ENCODE measurements at regions of chr22 and their contacts with region 1.

Region 1: GRCh38 chr22:42511401-42511891 is 8.2 kb downstream of the RRP7A start:
- DNase-seq: no peak
- ATAC-seq: peak in 1 of 4 donors; percentile 14
- H3K4me3 ChIP-seq: no peak overlapping the region
- H3K27ac ChIP-seq: peak overlapping the region in 1 of 12 donors; percentile 83
- H3K4me1 ChIP-seq: peaks cover 0 to 21% (median 4%) of the 10 kb centered on the region in 12 donors
- H3K27me3 ChIP-seq: no peaks in the 10 kb centered on the region
- CTCF ChIP-seq: no peak
- POLR2A ChIP-seq: no peak

Region 2: DNA sequence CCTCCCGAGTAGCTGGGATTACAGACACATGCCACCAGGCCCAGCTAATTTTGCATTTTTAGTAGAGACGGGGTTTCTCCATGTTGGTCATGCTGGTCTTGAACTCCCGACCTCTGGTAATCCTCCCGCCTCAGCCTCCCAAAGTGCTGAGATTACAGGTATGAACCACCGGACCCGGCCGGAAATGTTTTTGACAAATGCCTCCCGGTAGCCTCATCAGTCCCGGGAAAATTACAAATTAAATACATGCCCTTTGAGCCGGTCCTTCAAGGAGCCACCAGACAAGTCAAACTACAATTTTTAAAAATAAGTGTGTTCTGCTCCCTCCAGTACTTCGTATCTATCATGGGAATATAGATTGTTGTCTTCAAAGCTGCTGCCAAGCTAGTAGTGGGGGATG is 495.3 kb before region 1 on chr22:
- intact Hi-C with region 1: no loop called
- DNase-seq: no peak
- ATAC-seq: no peak
- H3K4me3 ChIP-seq: no peak overlapping the region
- H3K27ac ChIP-seq: no peak overlapping the region
- H3K4me1 ChIP-seq: no peaks in the 10 kb centered on the region
- H3K27me3 ChIP-seq: peaks cover 0 to 4% (median 0%) of the 10 kb centered on the region in 9 donors
- CTCF ChIP-seq: no peak
- POLR2A ChIP-seq: no peak

Region 3: GRCh38 chr22:42134100-42135020 is 377.1 kb before region 1 on chr22:
- intact Hi-C with region 1: no loop called
- DNase-seq: no peak
- ATAC-seq: no peak
- H3K4me3 ChIP-seq: no peak overlapping the region
- H3K27ac ChIP-seq: no peak overlapping the region
- H3K4me1 ChIP-seq: no peaks in the 10 kb centered on the region
- H3K27me3 ChIP-seq: peaks cover 0 to 5% (median 0%) of the 10 kb centered on the region in 9 donors
- CTCF ChIP-seq: no peak
- POLR2A ChIP-seq: no peak

Region 4: GRCh38 chr22:42437488-42438292 is 73.8 kb before region 1 on chr22:
- intact Hi-C with region 1: no loop called
- DNase-seq: peak; percentile 72 to 90 (median 78)
- ATAC-seq: peak; percentile 72 to 85 (median 84)
- H3K4me3 ChIP-seq: peak overlapping the region in 11 of 12 donors; percentile 3 to 57 (median 49)
- H3K27ac ChIP-seq: peak overlapping the region in 2 of 12 donors; percentile 12 to 66
- H3K4me1 ChIP-seq: peaks cover 0 to 76% (median 16%) of the 10 kb centered on the region in 12 donors
- H3K27me3 ChIP-seq: peaks cover 0 to 25% (median 3%) of the 10 kb centered on the region in 9 donors
- CTCF ChIP-seq: peak; percentile 86 to 98 (median 96)
- POLR2A ChIP-seq: no peak

Region 5: DNA sequence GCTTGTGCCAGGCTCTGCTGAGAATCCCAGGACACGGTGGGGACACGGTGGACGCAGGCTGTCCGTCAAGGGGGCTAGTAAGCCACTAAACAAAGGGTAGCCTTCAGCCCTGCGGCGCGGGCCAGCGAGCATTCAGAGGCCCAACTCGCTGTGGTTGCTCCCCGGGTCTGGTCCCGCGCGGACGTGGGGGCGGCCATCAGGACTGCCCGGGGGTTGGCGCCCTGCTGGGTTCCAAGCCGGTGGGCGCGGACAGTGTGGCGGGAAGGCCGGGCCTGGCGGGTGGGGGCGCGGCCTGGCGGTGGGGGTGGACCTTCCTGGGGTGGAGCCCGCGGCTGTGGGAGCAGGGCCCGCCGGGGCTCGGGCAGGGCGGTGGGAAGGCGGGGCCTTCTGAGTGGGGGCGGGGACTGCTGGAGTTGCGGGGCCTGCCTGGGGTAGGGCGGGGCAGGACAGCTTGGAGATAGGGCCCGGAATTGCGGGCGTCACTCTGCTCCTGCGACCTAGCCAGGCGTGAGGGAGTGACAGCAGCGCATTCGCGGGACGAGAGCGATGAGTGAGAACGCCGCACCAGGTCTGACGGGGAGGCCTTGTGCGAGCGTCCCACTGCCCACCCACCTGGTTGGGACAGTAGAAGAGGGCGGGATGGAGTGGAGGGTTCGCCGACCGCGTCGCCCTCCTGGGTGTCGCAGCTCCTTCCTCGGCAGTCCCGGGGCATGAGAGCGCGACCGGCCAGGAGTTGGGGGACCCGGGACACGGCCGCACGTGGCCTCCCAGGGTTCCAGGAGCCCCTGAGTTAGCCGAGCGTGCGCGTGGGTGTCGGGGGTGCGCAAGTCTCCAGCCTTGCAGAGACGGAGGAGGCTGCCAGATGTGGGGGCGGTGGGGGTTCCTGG is 42.3 kb after region 1 on chr22 and contains the start of gene SERHL2:
- intact Hi-C with region 1: loop called in 2 of 10 experiments (anchors 5 kb)
- DNase-seq: peak; percentile 92 to 97 (median 93)
- ATAC-seq: peak; percentile 89 to 98 (median 96)
- H3K4me3 ChIP-seq: peak within 1 kb of the TSS; percentile 18 to 72 (median 64)
- H3K27ac ChIP-seq: peak within 1 kb of the TSS in 8 of 12 donors; percentile 31 to 65 (median 52)
- H3K4me1 ChIP-seq: peaks cover 3 to 14% (median 8%) of the 10 kb centered on the region in 12 donors
- H3K27me3 ChIP-seq: peaks cover 0 to 6% (median 0%) of the 10 kb centered on the region in 9 donors
- CTCF ChIP-seq: no peak
- POLR2A ChIP-seq: peak in 1 of 2 donors; percentile 40
- total RNA-seq, gene SERHL2: 0.90 to 5.3 (median 3.5) TPM

Region 6: GRCh38 chr22:42587588-42588175 is 76.2 kb after region 1 on chr22:
- intact Hi-C with region 1: loop called in 1 of 10 experiments (anchors 5 kb)
- DNase-seq: no peak
- ATAC-seq: no peak
- H3K4me3 ChIP-seq: no peak overlapping the region
- H3K27ac ChIP-seq: peak overlapping the region in 1 of 12 donors; percentile 25
- H3K4me1 ChIP-seq: peaks cover 0 to 25% (median 3%) of the 10 kb centered on the region in 12 donors
- H3K27me3 ChIP-seq: no peaks in the 10 kb centered on the region
- CTCF ChIP-seq: no peak
- POLR2A ChIP-seq: no peak

Region 7: GRCh38 chr22:42604403-42604802 is 93.0 kb after region 1 on chr22:
- intact Hi-C with region 1: no loop called
- DNase-seq: no peak
- ATAC-seq: peak; percentile 28 to 56 (median 52)
- H3K4me3 ChIP-seq: no peak overlapping the region
- H3K27ac ChIP-seq: no peak overlapping the region
- H3K4me1 ChIP-seq: peaks cover 0 to 42% (median 24%) of the 10 kb centered on the region in 12 donors
- H3K27me3 ChIP-seq: no peaks in the 10 kb centered on the region
- CTCF ChIP-seq: no peak
- POLR2A ChIP-seq: no peak

Region 8: DNA sequence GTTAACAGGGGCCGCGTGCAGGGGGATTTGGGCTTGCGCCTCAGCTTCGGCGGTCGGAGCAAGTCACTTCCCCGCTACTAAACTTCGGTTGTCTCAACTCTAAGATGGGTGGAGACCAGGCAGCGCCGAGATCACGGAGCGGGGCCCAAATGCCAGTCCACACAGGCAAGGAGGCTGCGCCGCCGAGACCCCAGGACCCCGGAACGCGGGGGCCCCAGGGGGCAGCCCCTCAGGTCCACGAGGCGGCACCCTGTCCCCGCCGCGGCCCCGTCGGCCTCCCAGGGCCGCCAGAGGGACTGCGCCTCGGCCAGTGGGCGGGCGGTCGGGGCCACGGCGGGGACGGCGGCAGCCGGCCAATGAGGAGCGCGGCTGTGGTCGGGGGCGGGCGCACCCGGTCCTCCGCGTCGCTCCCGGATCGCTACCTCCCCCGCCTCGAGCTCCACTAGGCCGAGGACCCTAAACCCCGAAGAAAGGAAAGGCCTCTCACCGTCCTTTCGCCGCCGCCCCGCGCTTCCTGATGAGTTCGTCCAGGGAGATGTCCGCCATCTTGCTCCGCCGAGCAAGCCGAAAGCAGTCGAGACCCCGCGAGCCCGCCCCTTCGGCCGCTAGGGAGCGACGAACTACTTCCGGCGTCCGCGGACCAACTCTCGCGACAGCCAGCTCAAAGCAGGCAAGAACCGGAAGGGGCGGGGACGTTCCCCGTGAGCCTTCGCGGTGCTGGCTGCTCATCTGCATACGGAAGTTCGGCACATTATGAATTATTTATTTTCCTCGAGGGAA is 103.1 kb after region 1 on chr22 and contains the start of gene POLDIP3:
- intact Hi-C with region 1: loop called in 1 of 10 experiments (anchors 10 kb)
- DNase-seq: peak; percentile 99 to 100 (median 99)
- ATAC-seq: peak; percentile 88 to 93 (median 89)
- H3K4me3 ChIP-seq: peak within 1 kb of the TSS; percentile 66 to 98 (median 88)
- H3K27ac ChIP-seq: peak within 1 kb of the TSS; percentile 90 to 99 (median 97)
- H3K4me1 ChIP-seq: peaks cover 9 to 68% (median 53%) of the 10 kb centered on the region in 12 donors
- H3K27me3 ChIP-seq: no peaks in the 10 kb centered on the region
- CTCF ChIP-seq: peak in 10 of 12 donors; percentile 3 to 61 (median 26)
- POLR2A ChIP-seq: peak in 1 of 2 donors; percentile 78
- total RNA-seq, gene POLDIP3: 23.5 to 38.4 (median 29.0) TPM

Measured in heart left ventricle (tissue), 16 donors.